OCI-LY7 (cell line): ENCODE measurements at regions of chr10 and their contacts with region 1.

Region 1: DNA sequence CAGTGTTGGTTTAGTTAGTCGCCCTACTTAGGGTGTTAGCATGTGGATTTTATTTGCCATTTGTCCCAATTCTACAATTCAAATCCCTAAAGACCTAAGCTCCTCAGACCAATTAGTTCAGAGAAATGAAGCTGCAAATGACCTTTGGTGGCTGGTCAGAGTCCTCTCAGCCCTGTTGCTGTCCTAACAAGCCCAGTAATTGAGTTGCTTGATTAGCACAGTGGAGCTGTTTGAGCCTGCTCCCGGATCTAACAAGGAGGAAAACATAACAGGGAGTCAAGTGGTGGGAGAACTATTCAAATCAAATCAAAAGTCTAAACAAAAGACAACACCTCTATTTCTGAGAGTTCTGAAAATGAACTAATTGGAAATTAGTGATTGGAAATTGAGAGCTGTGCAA is 22.1 kb downstream of the ZDHHC6 start:
- DNase-seq: no peak
- H3K4me3 ChIP-seq: no peak overlapping the region
- H3K27ac ChIP-seq: no peak overlapping the region
- H3K4me1 ChIP-seq: no peaks in the 10 kb centered on the region
- CTCF ChIP-seq: no peak

Region 2: GRCh38 chr10:112404616-112405015 is 20.0 kb before region 1 on chr10:
- CTCF ChIA-PET with region 1: no interaction called
- POLR2A ChIA-PET with region 1: interaction called, 17 read pairs
- intact Hi-C with region 1: no loop called
- DNase-seq: no peak
- H3K4me3 ChIP-seq: no peak overlapping the region
- H3K27ac ChIP-seq: no peak overlapping the region
- H3K4me1 ChIP-seq: no peaks in the 10 kb centered on the region
- CTCF ChIP-seq: no peak

Region 3: GRCh38 chr10:112471878-112472487 is 47.3 kb after region 1 on chr10:
- CTCF ChIA-PET with region 1: no interaction called
- POLR2A ChIA-PET with region 1: no interaction called
- intact Hi-C with region 1: no loop called
- DNase-seq: peak; percentile 62
- H3K4me3 ChIP-seq: no peak overlapping the region
- H3K27ac ChIP-seq: no peak overlapping the region
- H3K4me1 ChIP-seq: no peaks in the 10 kb centered on the region
- CTCF ChIP-seq: peak; percentile 89